ENCODE measurements at regions of chr7 and their contacts with region 1.

Region 1: DNA sequence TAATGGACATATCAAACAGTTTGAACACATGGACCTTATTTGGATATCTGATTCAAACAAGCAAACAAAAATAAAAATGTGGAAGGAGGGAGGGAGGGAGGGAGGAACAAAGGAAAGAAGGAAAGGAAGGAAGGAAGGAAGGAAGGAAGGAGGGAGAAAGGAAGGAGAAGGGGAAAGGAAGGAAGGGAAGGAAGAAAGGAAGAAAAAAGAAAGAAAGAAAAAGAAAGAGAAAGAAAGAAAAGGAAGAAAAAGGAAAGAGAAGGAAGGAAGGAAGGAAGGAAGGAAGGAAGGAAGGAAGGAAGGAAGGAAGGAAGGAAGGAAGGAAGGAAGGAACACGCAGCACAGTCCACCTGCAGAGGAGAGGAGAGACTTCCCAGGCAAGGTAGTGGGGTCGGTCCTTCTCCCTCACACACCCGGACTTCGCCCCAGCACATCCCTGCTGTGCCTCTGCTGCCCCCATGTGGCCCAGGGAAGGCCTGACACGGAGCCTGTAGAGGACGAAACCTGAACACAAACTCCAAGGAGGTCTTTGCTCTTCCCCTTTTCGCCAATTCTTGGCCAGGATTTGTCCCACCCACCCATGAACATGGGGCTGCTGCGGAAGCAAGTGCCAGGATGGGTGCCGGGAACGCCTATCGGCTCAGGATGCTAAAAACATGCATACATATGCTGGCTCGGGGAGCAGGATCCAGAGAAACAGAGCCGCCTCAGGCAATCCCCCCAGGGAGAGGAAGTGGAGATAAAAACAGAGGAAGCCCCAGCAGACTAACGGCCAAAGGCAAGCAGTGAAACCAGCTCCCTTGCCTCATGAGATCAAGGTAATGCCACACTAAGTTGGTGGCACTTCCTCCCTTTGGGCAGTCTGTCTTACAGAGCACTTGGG is 52.3 kb upstream of the DGKI start:
- DNase-seq: peak; percentile 70 to 92 (median 86)
- H3K4me3 ChIP-seq: peak overlapping the region in 1 of 4 donors; percentile 1
- H3K27ac ChIP-seq: peak overlapping the region in 1 of 5 donors; percentile 29
- H3K4me1 ChIP-seq: peaks cover 7 to 16% of the 10 kb centered on the region in 2 donors
- H3K27me3 ChIP-seq: no peaks in the 10 kb centered on the region
- CTCF ChIP-seq: peak; percentile 85 to 97 (median 94)
- POLR2A ChIP-seq: no peak

Region 2: DNA sequence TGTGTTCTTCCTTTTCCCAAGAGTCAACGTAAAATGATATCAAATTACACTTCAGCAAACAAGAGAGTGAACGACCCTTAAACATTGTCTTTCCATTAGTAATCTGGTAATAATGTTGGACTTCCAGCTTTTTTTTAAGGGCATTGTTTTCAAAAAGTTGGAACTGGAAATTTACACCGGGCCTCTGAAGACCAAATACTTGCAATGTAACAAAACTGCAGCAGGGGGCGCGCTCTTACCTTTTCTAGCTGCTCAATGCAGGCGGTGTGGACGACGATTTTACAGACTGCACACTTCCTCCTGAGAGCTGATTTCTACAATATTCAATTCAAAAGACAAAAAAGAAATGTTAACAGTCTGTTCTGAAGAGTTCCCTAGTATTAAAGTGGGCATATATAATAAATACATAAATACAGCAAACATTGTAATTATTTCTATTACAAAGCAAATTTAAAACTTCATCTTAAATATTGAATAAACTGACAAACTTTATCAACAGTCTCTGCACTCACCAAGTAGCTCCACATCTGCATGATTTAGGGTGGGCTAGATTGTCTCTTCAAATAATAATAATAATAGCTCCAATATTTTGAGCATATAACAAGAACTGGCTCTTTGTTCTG is 242.7 kb before region 1 on chr7:
- intact Hi-C with region 1: loop called (anchors 5 kb)
- DNase-seq: peak; percentile 71 to 95 (median 88)
- H3K4me3 ChIP-seq: no peak overlapping the region
- H3K27ac ChIP-seq: no peak overlapping the region
- H3K4me1 ChIP-seq: no peaks in the 10 kb centered on the region
- H3K27me3 ChIP-seq: no peaks in the 10 kb centered on the region
- CTCF ChIP-seq: peak; percentile 62 to 88 (median 78)
- POLR2A ChIP-seq: no peak

Region 3: DNA sequence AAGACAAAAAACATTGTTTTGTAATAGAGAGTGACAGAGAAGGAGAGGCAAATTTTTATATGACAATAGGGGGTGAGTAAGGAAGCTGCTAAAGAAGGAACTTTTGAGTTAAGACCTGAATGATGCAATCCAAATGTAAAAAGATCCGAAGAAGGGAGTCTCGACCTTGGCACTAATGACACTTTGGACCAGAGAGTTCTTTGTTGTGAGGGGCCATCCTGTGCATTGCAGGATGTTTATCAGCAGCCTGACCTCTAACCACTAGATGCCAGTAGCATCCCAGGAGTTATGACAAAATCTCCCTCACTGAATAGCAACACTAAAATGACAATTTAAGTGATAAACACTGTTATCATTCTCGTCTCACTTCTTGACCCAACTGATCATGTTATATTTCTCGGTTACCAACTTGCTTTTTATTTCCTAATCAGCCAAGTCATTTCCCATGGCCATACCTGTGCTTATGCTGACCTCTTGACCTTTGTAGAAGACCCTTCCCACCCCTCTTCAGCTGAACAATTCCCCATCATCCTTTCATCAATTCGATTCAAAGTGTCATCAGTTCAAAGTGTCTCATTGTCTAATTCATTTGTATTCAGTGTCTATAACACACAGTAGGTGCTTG is 82.3 kb before region 1 on chr7:
- intact Hi-C with region 1: loop called (anchors 5 to 10 kb)
- DNase-seq: peak in 3 of 7 donors; percentile 13 to 26 (median 24)
- H3K4me3 ChIP-seq: no peak overlapping the region
- H3K27ac ChIP-seq: no peak overlapping the region
- H3K4me1 ChIP-seq: no peaks in the 10 kb centered on the region
- H3K27me3 ChIP-seq: no peaks in the 10 kb centered on the region
- CTCF ChIP-seq: peak in 5 of 6 experiments; percentile 24 to 54 (median 49)
- POLR2A ChIP-seq: no peak

Region 4: DNA sequence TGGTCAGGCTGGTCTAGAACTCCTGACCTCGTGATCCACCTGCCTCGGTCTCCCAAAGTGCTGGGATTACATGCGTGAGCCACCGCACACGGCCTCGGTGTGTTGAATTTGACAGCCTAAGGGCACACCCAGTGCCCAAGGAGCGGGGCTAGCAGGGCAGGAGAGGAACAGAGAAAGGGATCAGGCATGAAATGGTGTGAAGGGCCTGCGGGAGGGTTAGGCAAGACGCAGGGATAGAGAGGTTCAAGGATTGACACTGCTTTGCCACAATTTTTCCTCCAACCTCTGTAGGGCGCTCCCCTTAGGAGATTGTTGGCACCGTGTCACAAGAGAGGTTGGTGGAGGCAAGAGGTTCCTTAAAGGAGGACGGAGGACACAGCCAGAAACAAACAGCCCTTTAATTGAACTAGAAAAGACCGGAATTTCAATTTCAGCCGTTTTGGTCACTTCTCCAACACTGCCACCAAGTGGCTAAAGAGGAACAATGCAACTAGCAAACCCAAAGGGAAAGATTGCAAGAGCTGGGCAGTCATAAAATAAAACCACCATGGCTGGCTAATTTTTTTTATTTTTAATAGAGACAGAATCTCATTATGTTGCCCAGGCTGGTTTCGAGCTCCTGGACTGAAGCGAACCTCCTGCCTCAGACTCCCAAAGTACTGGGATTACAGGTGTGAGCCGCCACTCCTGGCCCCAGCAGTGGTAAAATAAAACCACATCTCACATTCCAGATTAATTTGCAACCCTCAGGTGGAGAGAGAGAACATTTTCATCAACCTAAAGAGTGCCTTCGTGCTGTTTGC is 109.7 kb after region 1 on chr7:
- intact Hi-C with region 1: loop called (anchors 2 to 5 kb)
- DNase-seq: peak in 2 of 7 donors; percentile 44 to 56
- H3K4me3 ChIP-seq: no peak overlapping the region
- H3K27ac ChIP-seq: peak overlapping the region in 1 of 5 donors; percentile 7
- H3K4me1 ChIP-seq: no peaks in the 10 kb centered on the region
- H3K27me3 ChIP-seq: no peaks in the 10 kb centered on the region
- CTCF ChIP-seq: peak; percentile 86 to 96 (median 90)
- POLR2A ChIP-seq: no peak

Measured in adrenal gland (tissue), 19 donors.